ENCODE measurements at regions of chr10 and their contacts with region 1.

Region 1: GRCh38 chr10:46992803-46993561 is 81.8 kb downstream of the PTPN20 start:
- H3K4me3 ChIP-seq: no peak overlapping the region
- H3K27ac ChIP-seq: no peak overlapping the region
- H3K4me1 ChIP-seq: no peaks in the 10 kb centered on the region
- CTCF ChIP-seq: no peak

Region 2: GRCh38 chr10:47311932-47312662 is 319.1 kb after region 1 on chr10:
- CTCF ChIA-PET with region 1: interaction called, 38 read pairs
- POLR2A ChIA-PET with region 1: no interaction called
- H3K4me3 ChIP-seq: no peak overlapping the region
- H3K27ac ChIP-seq: no peak overlapping the region
- H3K4me1 ChIP-seq: no peaks in the 10 kb centered on the region
- CTCF ChIP-seq: peak; percentile 80